ENCODE measurements at regions of chr16 and their contacts with region 1.

Region 1: DNA sequence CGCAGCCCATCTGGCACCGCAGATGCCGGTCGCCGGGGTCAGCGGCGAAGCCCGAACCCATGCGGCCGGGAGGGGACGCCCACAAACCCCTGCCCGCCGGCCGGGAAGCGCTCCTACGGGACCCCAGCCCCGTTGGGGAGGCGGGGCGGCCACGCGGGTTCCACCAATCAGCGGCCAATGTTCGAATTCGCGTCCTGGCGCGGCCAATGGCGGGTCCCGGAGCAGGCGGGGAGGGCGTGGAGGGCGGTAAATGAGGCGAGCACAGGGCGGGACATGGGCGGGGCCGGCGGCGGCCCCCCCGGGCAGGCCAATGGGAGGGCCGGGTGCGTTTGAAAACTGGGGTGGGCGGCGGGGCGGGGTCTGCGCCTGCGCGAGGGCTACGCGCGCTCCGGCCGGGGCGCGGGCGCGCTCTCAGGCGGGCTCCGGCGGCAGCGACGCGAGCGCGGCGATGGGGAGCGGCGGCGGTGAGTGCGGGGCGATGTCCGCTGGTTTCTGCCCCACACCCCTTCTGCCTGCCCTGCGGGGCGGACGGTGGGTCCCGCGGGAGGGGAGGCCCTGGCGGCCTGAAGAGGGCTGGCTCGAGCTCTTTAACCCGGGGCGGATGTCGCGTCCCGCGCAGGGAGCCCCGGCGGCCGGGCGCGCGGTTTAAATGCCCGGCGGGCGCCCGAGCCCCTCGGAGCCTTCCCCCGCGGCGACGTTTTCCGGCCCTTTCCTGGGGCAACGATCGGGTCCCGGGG is at the start of gene CCNF:
- DNase-seq: peak; percentile 85
- ATAC-seq: peak; percentile 88
- H3K4me3 ChIP-seq: peak within 1 kb of the TSS; percentile 82 to 87 (median 87)
- H3K27ac ChIP-seq: peak within 1 kb of the TSS; percentile 36
- H3K4me1 ChIP-seq: peaks cover 28% of the 10 kb centered on the region
- H3K27me3 ChIP-seq: peaks cover 10 to 28% of the 10 kb centered on the region in 2 experiments
- CTCF ChIP-seq: peak; percentile 37
- EP300 ChIP-seq: no peak
- POLR2A ChIP-seq: peak in 1 of 2 experiments; percentile 71; a peak in 2 of 4 replicates
- RAD21 ChIP-seq: peak; percentile 38
- total RNA-seq, gene CCNF: 13.7 and 22.8 TPM in 2 replicates

Region 2: DNA sequence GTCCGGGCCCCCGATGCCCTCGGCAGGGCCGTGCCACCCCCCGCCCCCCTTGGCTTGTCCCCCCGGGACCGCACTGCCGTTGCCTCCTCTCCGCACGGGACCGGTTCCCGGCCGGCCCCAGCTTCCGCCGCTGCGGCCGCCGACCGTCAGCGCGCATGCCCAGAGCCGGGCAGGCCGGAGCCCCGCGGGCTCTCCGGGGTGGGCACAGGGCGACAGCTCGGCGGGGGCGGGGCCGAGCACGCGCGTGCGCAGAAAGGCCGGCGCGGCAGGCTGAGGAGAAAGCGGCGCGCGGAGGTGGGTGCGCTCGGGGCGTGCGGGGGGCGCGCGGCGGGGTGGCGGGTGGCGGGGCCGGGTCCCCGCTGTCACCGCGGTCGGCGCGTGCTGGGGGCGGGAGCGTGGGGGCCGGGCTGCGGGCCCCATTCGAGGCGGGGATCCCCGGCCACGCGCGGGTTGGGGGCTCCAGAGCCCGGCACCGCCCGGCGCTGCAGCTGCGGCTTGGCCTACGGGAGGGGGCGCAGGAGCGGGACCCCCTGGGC is 45.7 kb after region 1 on chr16 and contains the start of gene TBC1D24:
- CTCF ChIA-PET with region 1: no interaction called
- POLR2A ChIA-PET with region 1: interaction called, 3 read pairs
- in situ Hi-C with region 1: no loop called
- intact Hi-C with region 1: loop called (anchors 5 kb)
- DNase-seq: peak; percentile 67
- ATAC-seq: peak; percentile 54
- H3K4me3 ChIP-seq: peak within 1 kb of the TSS; percentile 79 to 92 (median 85)
- H3K27ac ChIP-seq: peak within 1 kb of the TSS; percentile 58
- H3K4me1 ChIP-seq: peaks cover 61% of the 10 kb centered on the region
- H3K27me3 ChIP-seq: peaks cover 7 to 9% of the 10 kb centered on the region in 2 experiments
- CTCF ChIP-seq: no peak
- EP300 ChIP-seq: no peak
- POLR2A ChIP-seq: peak in 1 of 2 experiments; percentile 50; a peak in 3 of 4 replicates
- RAD21 ChIP-seq: no peak
- total RNA-seq, gene TBC1D24: 13.7 and 17.6 TPM in 2 replicates

Region 3: DNA sequence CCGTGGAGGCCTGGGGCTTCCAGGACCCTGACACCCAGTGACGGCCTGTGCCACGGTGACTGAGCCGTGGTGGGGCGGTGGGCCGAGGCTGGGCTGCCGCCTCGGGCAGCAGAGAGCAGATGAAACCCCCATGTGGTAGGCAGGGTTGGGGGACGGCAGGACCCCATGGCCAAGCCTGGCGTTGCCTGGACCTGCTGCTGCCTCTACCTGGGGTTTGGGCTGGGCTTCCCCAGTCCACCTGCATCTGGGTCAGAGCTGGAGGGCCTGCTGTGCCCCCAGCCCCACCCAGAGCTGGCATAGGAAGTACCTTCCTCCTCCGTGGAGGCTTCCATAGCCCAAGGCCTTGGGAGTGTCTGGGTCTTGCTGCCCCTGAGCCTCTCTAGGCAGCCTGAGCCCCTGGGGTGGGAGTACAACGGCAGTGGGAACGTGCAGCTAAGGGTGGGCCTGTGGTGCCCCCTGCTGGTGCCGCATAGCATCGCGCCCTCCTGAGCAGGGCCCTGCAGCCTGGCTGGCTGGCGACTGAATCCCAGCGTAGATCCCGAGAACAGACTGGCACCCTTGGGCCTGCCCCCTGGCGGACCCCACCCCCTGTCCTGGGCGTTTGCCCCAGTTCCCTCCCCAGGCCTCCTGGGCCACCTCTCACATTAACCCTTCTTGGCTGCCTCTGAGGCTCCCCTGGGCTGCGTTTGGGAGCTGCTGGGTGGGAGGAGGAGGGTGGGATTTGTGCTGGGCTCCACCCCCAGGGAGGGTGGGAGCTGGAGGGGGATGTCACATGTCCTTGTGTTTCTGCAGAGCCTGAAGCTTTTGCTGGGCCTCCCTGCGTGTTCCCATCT is 71.9 kb after region 1 on chr16:
- CTCF ChIA-PET with region 1: interaction called, 9 read pairs
- POLR2A ChIA-PET with region 1: no interaction called
- in situ Hi-C with region 1: loop called (anchors 5 kb)
- intact Hi-C with region 1: loop called (anchors 1 kb)
- DNase-seq: peak; percentile 64
- ATAC-seq: peak; percentile 91
- H3K4me3 ChIP-seq: peak overlapping the region in 2 of 3 experiments; percentile 26 to 56; a peak in 2 of 6 replicates
- H3K27ac ChIP-seq: no peak overlapping the region
- H3K4me1 ChIP-seq: peaks cover 22% of the 10 kb centered on the region
- H3K27me3 ChIP-seq: no peaks in the 10 kb centered on the region
- CTCF ChIP-seq: peak; percentile 99
- EP300 ChIP-seq: no peak
- POLR2A ChIP-seq: no peak
- RAD21 ChIP-seq: peak; percentile 98